ENCODE measurements at regions of chr6 and their contacts with region 1.

Region 1: DNA sequence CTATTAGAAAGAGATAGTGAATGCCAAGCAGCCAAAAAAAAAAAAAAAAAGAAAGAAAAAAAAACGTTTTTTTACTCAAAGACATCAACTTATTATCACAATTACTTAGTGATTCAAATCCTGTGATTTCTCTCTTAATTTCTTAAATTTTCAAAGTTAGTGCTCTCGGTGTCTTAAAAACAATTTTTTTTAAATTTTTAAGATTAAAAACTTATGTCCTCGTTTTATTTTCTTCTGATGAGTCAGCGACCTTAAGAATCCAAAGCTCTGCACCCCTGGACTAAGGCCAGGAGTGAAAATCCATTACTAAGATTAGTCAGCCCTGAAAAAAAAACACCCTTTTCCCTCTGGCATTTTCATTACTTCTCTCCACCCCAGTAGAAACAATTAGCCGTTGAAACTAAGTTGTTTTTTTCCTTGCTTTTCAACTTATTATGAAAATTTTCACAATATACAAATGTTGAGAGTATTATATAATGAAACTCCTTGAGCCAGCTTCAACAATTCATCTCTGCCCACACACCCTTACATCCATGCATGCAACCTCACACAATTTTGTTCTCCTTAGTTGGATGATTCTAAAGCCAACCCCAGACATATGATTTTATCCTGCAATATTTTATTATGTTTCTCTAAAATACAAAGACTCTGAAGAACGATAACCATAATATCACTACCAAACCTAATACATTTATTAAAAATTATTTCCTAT is 85.6 kb upstream of the CARMIL1 start:
- DNase-seq: peak; percentile 85
- H3K4me3 ChIP-seq: no peak overlapping the region
- H3K27ac ChIP-seq: peak overlapping the region; percentile 95
- H3K27me3 ChIP-seq: no peaks in the 10 kb centered on the region
- CTCF ChIP-seq: no peak

Region 2: GRCh38 chr6:25173951-25174474 is 19.6 kb before region 1 on chr6:
- CTCF ChIA-PET with region 1: no interaction called
- POLR2A ChIA-PET with region 1: interaction called, 47 read pairs
- DNase-seq: peak; percentile 91
- H3K4me3 ChIP-seq: no peak overlapping the region
- H3K27ac ChIP-seq: peak overlapping the region; percentile 87
- H3K27me3 ChIP-seq: no peaks in the 10 kb centered on the region
- CTCF ChIP-seq: no peak